Transverse colon (tissue), 4 donors: ENCODE measurements at regions of chr21 and their contacts with region 1.

Region 1: DNA sequence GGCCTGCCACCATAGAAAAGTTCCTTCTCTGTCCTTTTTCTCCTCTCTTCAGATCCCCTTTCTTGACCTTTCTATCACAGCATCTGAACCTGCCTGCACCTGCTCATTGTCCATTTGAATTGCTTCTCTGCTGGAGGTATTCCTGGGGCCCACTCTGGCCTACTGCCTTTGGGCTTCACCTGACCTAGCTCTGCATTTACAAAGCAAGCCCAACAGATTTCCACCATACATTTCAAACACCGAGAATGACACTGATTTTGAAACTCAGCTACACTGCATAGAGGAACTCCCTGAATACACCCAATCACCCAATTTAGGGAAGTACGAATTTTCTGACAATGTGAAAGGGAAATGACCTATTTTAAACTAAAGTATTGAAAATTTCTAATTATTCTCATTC is 284.5 kb upstream of the USP25 start:
- DNase-seq: no peak
- H3K4me3 ChIP-seq: no peak overlapping the region
- H3K27ac ChIP-seq: no peak overlapping the region
- H3K4me1 ChIP-seq: peaks cover 3 to 21% (median 4%) of the 10 kb centered on the region in 4 donors
- H3K27me3 ChIP-seq: no peaks in the 10 kb centered on the region
- CTCF ChIP-seq: no peak
- EP300 ChIP-seq: no peak
- POLR2A ChIP-seq: no peak

Region 2: DNA sequence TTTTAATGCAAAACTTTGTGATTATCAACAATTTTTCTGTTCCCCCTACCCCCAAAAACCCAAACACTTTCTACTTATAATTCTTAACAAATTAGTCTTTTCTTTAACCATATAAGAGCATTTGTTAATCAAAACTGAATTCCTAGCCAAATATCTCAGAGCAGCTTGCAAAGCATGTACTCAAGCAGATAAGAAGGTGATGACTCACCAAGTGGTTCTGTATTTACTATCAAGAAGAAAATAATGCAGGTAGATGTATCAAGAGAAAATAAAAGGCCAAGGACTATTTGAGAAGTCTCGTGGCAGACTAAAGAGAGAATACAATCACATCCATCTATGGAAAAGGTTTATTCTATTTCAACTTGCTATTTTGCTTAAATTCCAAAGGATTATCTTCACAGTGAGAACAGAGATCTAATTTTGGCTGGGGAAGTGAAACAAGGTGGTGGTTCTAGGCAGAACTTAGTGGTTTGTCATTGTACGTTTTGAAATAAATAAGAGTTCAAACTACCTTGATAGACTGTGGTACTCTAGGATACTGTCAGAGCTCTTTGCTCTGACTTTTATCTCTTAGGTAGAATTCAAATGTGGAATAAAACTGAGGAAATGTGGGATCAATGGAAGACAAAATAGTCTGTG is 285.8 kb before region 1 on chr21:
- in situ Hi-C with region 1: no loop called
- intact Hi-C with region 1: no loop called
- DNase-seq: no peak
- H3K4me3 ChIP-seq: no peak overlapping the region
- H3K27ac ChIP-seq: no peak overlapping the region
- H3K4me1 ChIP-seq: no peaks in the 10 kb centered on the region
- H3K27me3 ChIP-seq: no peaks in the 10 kb centered on the region
- CTCF ChIP-seq: no peak
- EP300 ChIP-seq: no peak
- POLR2A ChIP-seq: no peak

Region 3: DNA sequence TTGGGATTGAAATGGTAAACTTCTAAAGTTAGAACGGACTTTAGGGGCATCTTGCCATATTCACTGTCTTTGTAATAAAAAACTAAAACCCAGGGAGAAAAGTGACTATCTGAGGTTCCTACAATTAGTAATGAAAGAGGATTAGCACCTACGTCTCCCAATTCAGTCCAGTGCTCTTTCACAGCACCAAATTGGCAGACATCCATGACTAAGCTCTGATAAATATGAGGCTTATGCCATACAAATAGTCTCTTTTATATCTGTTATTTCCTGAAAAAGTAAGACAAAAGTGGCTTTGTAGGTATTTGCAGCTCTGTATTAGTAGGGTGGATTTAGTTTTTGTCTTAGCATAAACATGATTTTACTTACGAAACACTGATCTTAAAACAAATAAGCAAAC is 65.6 kb before region 1 on chr21:
- in situ Hi-C with region 1: loop called in 1 of 4 experiments (anchors 10 kb)
- intact Hi-C with region 1: no loop called
- DNase-seq: no peak
- H3K4me3 ChIP-seq: no peak overlapping the region
- H3K27ac ChIP-seq: no peak overlapping the region
- H3K4me1 ChIP-seq: no peaks in the 10 kb centered on the region
- H3K27me3 ChIP-seq: no peaks in the 10 kb centered on the region
- CTCF ChIP-seq: no peak
- EP300 ChIP-seq: no peak
- POLR2A ChIP-seq: no peak

Region 4: DNA sequence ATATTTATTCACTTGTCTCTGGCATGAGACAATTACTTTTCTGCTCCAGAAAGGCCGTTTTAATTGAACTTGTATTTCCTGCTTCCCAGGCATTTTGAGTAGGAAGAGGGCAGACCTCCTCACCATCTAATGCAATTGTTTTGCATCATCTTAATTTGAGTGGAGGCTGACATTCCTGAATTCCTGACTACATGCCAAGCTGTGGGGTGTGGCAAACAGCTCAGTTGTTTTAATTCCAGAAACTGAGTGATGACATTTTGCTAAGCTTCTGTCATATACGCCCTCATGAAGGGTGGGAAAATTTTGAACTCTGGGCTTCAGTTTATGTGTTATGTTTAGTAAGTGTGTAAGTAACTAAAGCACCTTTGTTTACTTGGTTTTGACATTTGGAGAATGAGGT is 159.1 kb after region 1 on chr21:
- in situ Hi-C with region 1: no loop called
- intact Hi-C with region 1: no loop called
- DNase-seq: no peak
- H3K4me3 ChIP-seq: no peak overlapping the region
- H3K27ac ChIP-seq: no peak overlapping the region
- H3K4me1 ChIP-seq: no peaks in the 10 kb centered on the region
- H3K27me3 ChIP-seq: no peaks in the 10 kb centered on the region
- CTCF ChIP-seq: no peak
- EP300 ChIP-seq: no peak
- POLR2A ChIP-seq: no peak

Region 5: DNA sequence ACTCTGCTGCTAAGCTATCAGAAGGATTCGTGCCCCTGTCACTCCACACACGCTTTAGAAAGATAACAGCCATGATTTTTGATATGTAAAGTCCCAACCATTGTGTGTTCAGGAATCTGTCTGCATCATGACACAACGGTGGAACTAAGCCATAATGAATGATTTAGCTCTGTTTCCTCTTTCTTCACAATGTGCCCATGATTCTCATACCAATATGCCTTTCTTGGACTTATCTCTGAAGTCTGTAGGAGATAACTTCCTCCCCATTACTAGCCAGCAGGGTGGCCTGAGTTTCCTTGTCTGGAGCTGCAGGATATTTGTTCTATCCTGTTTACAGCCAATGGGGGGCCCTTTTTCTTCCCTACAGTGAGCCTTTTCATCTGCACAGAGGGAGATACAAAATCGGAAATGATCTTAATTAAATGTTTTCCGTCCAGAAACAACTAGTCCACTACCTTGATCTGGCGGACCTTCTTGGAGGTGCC is 796.2 kb after region 1 on chr21:
- in situ Hi-C with region 1: no loop called
- intact Hi-C with region 1: no loop called
- DNase-seq: no peak
- H3K4me3 ChIP-seq: no peak overlapping the region
- H3K27ac ChIP-seq: no peak overlapping the region
- H3K4me1 ChIP-seq: no peaks in the 10 kb centered on the region
- H3K27me3 ChIP-seq: no peaks in the 10 kb centered on the region
- CTCF ChIP-seq: no peak
- EP300 ChIP-seq: no peak
- POLR2A ChIP-seq: no peak